ENCODE measurements at regions of chr20 and their contacts with region 1.

Region 1: DNA sequence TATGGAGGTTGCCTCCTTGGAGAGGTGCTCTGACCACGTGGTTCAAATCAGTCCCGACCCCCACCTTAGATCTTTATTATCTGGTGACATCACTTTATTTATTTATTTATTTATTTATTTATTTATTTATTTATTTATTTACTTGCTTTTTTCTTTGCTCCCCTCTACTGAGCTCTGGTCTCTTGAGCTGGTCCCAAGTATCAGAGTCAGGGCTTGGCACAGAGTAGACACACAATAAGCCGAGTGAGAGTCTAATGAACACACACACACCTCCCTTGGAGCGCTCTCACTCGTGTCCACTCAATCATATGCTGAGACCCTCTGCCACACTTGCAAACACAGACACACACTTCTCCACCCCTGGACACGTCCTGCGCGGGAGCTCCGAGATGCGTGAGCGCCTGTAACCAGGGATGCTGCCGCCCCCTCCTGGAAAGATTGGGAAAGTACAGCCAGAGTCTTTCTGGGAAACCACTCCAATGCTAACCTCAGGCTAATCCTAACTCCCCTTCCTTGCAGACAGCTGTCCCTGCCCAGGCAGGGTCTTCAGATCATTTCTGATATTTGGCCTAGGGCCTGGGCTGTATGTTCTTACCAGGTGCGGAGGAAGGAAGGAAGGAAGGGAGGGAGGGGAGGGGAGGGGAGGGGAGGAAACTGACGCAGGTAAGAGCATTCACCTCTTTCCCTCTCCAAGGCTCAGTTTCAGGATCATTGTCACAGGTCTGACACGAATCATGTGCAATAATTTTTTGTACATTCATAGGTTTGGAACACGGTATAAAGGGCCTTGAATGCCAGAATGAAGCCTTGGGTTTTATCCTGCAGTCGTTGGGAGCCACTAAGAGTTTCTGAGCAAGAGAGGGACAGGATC is 70.9 kb downstream of the STK35 start:
- DNase-seq: peak; percentile 69
- H3K4me3 ChIP-seq: no peak overlapping the region
- H3K27ac ChIP-seq: no peak overlapping the region
- H3K4me1 ChIP-seq: no peaks in the 10 kb centered on the region
- H3K27me3 ChIP-seq: no peaks in the 10 kb centered on the region
- CTCF ChIP-seq: peak; percentile 81

Region 2: GRCh38 chr20:1764136-1765033 is 408.2 kb before region 1 on chr20:
- intact Hi-C with region 1: loop called (anchors 5 kb)
- DNase-seq: peak; percentile 86
- H3K4me3 ChIP-seq: no peak overlapping the region
- H3K27ac ChIP-seq: no peak overlapping the region
- H3K4me1 ChIP-seq: no peaks in the 10 kb centered on the region
- H3K27me3 ChIP-seq: no peaks in the 10 kb centered on the region
- CTCF ChIP-seq: peak; percentile 86

Region 3: DNA sequence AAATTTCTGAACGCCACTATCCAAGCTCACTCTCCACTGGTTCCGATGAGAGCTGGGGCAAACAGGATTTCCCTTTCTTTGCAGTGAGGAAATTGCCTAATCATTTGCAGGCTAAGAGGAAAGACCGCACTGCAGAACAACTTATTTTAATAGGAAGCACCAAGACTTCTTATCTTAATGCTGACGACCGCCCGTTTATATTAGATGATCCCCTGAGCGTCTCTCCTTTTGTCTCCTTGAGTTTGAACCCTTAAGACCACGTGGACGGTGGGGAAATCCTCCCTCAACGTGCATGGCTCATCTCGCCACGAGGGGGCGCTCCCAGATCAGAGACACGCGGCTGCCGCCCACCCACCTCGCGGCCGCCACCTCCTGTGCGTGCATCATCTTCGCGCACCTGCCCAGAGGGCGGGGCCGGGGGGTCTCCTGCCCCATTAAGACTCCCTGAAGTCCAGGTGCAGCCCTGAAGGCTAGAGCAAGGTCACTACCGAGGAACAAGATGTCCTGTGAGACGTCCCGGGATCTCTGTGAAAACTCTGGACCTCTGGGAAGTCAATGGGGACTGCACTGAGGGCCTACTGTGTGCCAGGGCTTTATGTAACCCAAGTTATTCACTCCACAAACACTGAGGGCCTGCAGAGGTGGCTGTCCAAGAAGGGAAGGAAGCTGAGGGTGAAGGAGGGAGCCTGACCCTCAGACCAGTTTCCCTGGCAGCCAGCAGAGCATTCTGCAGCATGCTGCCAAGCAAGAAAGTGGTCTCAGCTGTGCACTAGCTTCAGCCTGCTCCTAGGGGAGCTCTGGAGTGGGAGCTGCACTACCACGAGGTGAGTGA is 206.8 kb before region 1 on chr20:
- intact Hi-C with region 1: loop called (anchors 2 kb)
- DNase-seq: peak; percentile 74
- H3K4me3 ChIP-seq: no peak overlapping the region
- H3K27ac ChIP-seq: no peak overlapping the region
- H3K4me1 ChIP-seq: no peaks in the 10 kb centered on the region
- H3K27me3 ChIP-seq: no peaks in the 10 kb centered on the region
- CTCF ChIP-seq: peak; percentile 94

Region 4: GRCh38 chr20:2005831-2006426 is 166.6 kb before region 1 on chr20:
- intact Hi-C with region 1: loop called (anchors 2 kb)
- DNase-seq: peak; percentile 74
- H3K4me3 ChIP-seq: no peak overlapping the region
- H3K27ac ChIP-seq: no peak overlapping the region
- H3K4me1 ChIP-seq: no peaks in the 10 kb centered on the region
- H3K27me3 ChIP-seq: no peaks in the 10 kb centered on the region
- CTCF ChIP-seq: no peak

Region 5: GRCh38 chr20:2335096-2335870 is 162.7 kb after region 1 on chr20:
- intact Hi-C with region 1: no loop called
- DNase-seq: peak; percentile 13
- H3K4me3 ChIP-seq: no peak overlapping the region
- H3K27ac ChIP-seq: no peak overlapping the region
- H3K4me1 ChIP-seq: no peaks in the 10 kb centered on the region
- H3K27me3 ChIP-seq: no peaks in the 10 kb centered on the region
- CTCF ChIP-seq: no peak

Measured in colonic mucosa (tissue), 4 donors.